Left colon (tissue), 2 donors: ENCODE measurements at regions of chr1 and their contacts with region 1.

Region 1: GRCh38 chr1:155323798-155324610 is 3.3 kb downstream of the RUSC1 start:
- DNase-seq: peak; percentile 94 to 98
- ATAC-seq: peak; percentile 73

Region 2: DNA sequence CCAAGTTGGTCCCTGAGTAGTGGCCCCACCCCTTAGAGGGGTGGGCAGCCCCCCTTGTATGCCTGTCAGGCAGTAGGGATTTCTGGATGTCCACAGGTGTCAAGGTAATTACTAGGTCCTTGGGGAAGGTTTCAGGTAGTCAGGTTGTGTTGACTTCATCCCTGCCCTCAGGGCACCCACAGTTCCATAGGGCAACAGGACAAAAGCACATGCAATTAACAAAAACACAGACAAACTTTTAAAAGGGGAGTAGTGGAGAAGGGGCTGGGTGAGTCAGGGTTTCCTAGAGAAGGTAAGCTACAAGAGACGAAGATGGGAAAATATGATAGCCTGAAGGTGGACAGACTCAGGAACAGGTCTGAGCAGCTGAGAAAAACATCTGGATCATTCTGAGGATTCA is 165.0 kb before region 1 on chr1:
- intact Hi-C with region 1: no loop called
- DNase-seq: no peak
- ATAC-seq: no peak

Region 3: GRCh38 chr1:155255243-155256007 is 68.6 kb before region 1 on chr1 and contains the start of gene ENTREP3:
- intact Hi-C with region 1: loop called (anchors 1 to 10 kb)
- DNase-seq: peak; percentile 91 to 92
- ATAC-seq: peak; percentile 88
- total RNA-seq, gene ENTREP3: 19.9 to 21.7 TPM

Region 4: DNA sequence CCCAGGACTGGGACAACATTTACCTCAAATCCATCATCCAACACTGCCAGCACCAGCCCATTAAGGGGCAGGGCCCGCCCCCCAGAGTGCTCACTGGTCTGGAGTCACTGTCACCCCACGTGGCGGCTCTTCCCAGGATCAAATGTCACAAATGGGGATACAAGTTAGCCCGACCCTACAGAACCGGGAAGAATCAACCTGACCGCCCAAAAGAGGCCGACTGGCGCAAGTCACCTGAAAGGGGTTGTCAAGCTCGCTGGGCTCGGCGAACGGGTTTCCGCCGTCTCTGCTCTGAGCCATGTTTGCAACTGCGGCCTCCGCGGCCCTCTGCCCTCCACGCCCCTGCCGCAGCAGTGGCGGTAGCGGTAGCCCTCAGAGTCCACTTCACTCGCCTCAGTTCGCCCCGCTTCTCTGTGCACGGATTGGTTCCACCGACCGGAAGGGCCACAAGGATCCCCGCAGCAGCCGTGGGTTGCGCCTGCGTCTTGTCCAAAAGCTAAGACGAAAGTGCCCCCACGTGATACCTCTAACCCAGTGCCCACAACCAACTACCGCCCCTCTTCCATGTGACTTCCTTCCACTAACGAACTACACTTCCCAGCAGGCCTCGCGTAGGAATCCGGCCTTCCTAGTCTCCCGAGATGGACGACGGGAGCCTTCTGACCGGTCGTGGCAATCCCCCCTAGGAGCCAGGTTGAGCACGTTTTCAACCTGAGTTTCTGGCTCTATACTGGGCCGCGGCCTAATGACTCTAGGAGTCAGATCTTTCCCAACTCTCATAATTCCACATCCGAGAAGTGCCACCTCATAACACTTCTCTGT is 61.9 kb before region 1 on chr1 and contains the start of gene SCAMP3:
- intact Hi-C with region 1: loop called in 1 of 2 experiments (anchors 10 kb)
- DNase-seq: peak; percentile 94 to 98
- ATAC-seq: peak; percentile 96
- total RNA-seq, gene SCAMP3: 43.1 to 53.2 TPM